Astrocyte of the cerebellum (primary cell): ENCODE measurements at regions of chr13 and their contacts with region 1.

Region 1: GRCh38 chr13:99980201-99980823 is 1.3 kb upstream of the ZIC2 start:
- DNase-seq: no peak
- H3K4me3 ChIP-seq: peak overlapping the region; percentile 94
- CTCF ChIP-seq: no peak

Region 2: DNA sequence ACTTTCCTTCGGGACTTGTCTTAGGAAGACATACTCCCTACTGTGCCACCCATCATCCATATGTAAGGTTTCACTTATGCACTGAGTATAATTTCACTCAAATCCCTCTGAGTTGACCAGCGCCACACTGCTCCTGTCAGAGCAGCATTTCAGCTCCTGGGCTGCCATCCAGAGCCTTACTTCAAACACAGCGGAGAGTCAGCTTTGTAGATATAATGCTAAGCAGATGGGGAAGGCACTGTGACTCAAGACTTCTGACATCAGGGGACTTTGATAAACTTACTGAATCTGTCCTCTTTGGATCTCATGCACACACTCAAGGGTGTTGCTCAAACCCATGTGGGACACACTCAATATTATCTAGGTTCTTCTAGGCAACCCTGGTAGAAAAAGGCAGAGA is 1037.3 kb before region 1 on chr13:
- in situ Hi-C with region 1: no loop called
- DNase-seq: no peak
- H3K4me3 ChIP-seq: no peak overlapping the region
- CTCF ChIP-seq: no peak

Region 3: GRCh38 chr13:100235311-100235901 is 255.1 kb after region 1 on chr13:
- in situ Hi-C with region 1: loop called (anchors 25 kb)
- DNase-seq: peak; percentile 50
- H3K4me3 ChIP-seq: no peak overlapping the region
- CTCF ChIP-seq: peak; percentile 50

Region 4: GRCh38 chr13:100514788-100515409 is 534.6 kb after region 1 on chr13:
- in situ Hi-C with region 1: loop called (anchors 10 kb)
- DNase-seq: peak; percentile 73
- H3K4me3 ChIP-seq: no peak overlapping the region
- CTCF ChIP-seq: peak; percentile 96